ENCODE measurements at regions of chr2 and their contacts with region 1.

Region 1: DNA sequence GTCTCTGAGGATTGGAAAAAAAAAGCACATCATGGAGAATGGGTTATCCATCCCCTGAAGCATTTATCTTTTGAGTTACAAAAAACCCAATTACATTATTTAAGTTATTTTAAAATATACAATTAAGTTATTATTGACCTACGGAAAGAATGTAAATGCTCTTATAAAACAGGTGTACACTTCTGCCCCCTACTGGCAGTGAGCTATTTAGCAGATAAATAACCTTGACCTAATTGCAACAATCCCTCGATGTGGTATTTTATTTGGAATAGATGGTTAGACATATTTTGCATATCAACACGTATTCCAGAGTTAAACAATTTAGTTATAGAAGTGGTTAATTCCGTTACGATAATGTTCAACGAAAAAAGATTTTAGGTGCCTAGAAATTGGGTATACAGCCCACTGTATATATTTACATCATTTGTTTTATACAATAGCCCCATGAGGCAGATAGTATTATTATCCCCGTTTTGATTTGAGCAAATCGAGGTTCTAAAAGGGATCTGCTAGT is 9.1 kb upstream of the DAW1 start:
- DNase-seq: no peak

Region 2: DNA sequence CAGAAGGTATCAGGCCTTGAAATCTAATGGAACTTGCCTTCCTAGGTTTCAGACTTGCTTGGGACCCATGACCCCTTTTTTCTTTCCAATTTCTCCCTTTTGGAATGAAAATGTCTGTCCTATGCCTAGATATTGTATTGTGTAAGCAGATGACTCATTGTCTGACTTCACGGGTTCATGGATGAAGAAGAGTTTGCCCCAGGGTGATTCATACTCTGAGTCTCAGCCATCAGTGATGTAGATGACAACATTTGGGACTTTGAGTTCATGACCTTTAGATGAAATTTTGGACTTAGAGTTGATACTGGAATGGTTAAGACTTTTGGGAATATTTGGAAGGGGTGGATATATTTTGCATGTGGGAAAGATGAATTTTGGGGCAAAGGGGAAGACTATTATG is 206.8 kb before region 1 on chr2:
- intact Hi-C with region 1: loop called (anchors 5 kb)
- DNase-seq: no peak

Region 3: GRCh38 chr2:227817850-227818674 is 44.2 kb before region 1 on chr2:
- intact Hi-C with region 1: loop called (anchors 10 kb)
- DNase-seq: peak; percentile 25 to 92 (median 64)